GM12878 (cell line): ENCODE measurements at regions of chr2 and their contacts with region 1.

Region 1: DNA sequence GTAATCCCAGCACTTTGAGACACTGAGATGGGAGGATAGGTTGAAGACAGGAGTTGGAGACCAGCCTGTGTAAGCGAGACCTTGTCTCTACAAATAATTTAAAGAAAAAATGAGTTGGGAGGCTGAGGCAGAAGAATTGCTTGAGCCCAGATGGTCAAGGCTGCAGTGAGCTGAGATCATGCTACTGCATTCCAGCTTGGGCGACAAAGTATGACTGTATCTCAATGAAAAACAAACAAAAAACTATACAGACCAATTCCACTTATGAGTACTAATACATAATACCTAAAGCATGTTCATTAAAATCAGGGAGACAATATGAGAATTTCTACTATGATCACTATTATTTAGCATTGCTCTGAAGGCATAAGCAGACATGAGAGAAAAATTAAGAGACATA is 12.6 kb downstream of the RNF149 start:
- DNase-seq: no peak
- ATAC-seq: no peak
- H3K4me3 ChIP-seq: no peak overlapping the region
- H3K27ac ChIP-seq: no peak overlapping the region
- H3K4me1 ChIP-seq: peaks cover 10% of the 10 kb centered on the region; the same call in 1 of the 2 replicates
- H3K27me3 ChIP-seq: no peaks in the 10 kb centered on the region
- CTCF ChIP-seq: no peak
- EP300 ChIP-seq: no peak
- POLR2A ChIP-seq: no peak
- RAD21 ChIP-seq: no peak

Region 2: DNA sequence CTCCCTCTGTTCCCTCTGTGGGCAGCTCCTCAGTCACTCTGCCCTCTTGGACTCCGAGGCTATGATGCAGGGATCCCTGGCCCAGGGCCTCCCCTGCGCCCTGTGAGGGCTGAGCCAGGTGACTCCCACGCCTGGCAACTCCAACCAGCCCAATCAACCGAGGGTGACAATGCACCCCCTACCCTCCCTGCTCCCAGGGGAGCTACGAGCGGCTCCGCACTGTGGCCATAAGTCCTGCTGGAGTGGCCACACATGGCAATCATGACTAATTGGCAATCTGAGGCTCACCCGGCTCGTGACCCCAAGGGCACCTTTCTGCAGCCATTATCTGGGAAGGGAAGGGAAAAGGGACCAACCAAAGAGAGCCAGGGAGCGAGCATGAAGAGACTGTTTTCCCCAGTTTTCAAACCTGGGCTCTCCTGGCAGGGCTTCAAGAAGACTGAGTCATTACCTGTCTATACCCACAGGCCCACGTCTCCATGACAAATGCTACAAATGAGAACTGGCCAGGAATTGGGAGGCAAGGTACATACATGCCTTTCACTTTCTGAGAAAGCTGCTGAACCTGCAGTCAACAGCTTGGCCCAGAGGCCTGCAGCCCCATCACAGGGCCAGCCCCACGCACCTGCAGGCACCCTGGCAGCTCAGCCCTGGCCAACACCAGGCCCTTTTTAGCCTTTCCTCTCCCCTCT is 248.7 kb before region 1 on chr2:
- CTCF ChIA-PET with region 1: no interaction called
- POLR2A ChIA-PET with region 1: no interaction called
- RAD21 ChIA-PET with region 1: no interaction called
- SMC1A ChIA-PET with region 1: no interaction called
- in situ Hi-C with region 1: no loop called
- intact Hi-C with region 1: no loop called
- DNase-seq: no peak
- ATAC-seq: no peak; the same call in 2 of the 3 replicates
- H3K4me3 ChIP-seq: no peak overlapping the region
- H3K27ac ChIP-seq: no peak overlapping the region
- H3K4me1 ChIP-seq: peaks cover 30% of the 10 kb centered on the region
- H3K27me3 ChIP-seq: no peaks in the 10 kb centered on the region
- CTCF ChIP-seq: no peak
- EP300 ChIP-seq: no peak
- POLR2A ChIP-seq: no peak
- RAD21 ChIP-seq: no peak

Region 3: DNA sequence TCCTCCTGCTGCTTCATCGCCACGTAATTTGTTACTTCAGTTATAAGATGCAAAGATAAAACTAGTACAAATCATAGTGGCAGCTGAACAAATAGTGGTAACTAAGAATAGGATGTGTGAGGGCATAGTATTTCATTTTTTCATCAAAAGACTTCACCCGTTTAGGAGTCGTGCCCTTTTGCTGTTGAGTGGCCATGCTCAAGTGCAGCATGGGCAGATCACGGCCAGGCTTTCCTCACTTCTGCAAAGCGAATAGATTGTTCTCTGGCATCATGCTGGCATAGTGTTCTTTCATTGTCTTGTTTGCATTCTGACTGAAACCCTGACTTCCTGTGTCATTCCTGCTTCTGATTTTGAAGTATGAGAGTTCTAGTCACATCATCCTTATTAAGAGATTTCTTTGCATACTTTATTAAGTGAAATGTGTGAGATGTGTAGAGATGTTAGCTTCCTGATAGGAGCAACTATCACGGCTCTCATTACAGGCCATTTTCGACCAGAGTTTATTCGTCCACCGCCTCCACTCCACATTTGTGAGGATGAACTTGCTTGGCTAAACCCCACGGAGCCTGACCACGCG is 31.4 kb before region 1 on chr2:
- CTCF ChIA-PET with region 1: interaction called, 3 read pairs
- POLR2A ChIA-PET with region 1: no interaction called
- RAD21 ChIA-PET with region 1: no interaction called
- SMC1A ChIA-PET with region 1: interaction called, 10 read pairs
- in situ Hi-C with region 1: loop called (anchors 5 kb)
- intact Hi-C with region 1: no loop called
- DNase-seq: no peak
- ATAC-seq: no peak
- H3K4me3 ChIP-seq: no peak overlapping the region
- H3K27ac ChIP-seq: no peak overlapping the region
- H3K4me1 ChIP-seq: no peaks in the 10 kb centered on the region
- H3K27me3 ChIP-seq: no peaks in the 10 kb centered on the region
- CTCF ChIP-seq: no peak
- EP300 ChIP-seq: no peak
- POLR2A ChIP-seq: no peak
- RAD21 ChIP-seq: no peak

Region 4: DNA sequence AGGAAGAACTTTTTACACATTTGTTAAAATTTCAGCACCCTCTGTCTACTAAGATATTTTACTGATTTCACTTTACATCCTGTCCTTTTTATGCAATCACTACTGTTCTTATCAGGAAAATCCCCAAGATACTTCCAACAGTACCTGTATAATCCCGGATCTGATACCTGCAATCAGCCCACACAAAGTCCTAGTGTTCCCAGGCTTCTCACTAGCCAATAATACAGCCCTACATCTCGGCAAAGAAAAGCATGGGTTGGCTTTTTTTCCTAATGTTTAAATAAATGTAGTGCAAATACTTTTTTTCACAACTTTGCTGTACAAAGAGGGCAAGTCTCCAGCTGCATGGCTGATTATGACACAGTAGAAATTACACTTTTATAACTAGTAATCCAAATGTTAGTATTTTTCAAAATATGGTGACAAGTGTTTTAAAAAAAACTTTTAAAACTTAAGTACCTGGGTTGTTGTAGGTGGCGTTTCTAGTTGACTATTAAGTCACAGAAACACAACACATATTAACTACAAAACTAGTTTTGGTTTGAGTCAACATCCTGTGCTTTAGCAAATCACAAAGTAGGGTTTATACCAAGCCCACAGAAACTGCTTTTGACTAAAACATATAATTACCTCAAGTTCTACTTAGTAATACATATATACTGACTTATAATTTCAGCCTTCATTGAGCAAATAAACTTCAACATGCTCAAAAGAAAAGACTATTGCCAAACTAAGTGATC is 23.7 kb before region 1 on chr2:
- CTCF ChIA-PET with region 1: interaction called, 3 read pairs
- POLR2A ChIA-PET with region 1: interaction called, 5 read pairs
- RAD21 ChIA-PET with region 1: no interaction called
- SMC1A ChIA-PET with region 1: interaction called, 10 read pairs
- in situ Hi-C with region 1: no loop called
- intact Hi-C with region 1: no loop called
- DNase-seq: peak; percentile 73
- ATAC-seq: peak; percentile 93
- H3K4me3 ChIP-seq: no peak overlapping the region
- H3K27ac ChIP-seq: peak overlapping the region; percentile 50; the same call in 1 of the 2 replicates
- H3K4me1 ChIP-seq: peaks cover 13% of the 10 kb centered on the region
- H3K27me3 ChIP-seq: no peaks in the 10 kb centered on the region
- CTCF ChIP-seq: no peak
- EP300 ChIP-seq: peak; percentile 46 to 74; a peak in 2 of 4 replicates
- POLR2A ChIP-seq: no peak
- RAD21 ChIP-seq: no peak

Region 5: GRCh38 chr2:101282980-101283379 is 12.9 kb before region 1 on chr2:
- CTCF ChIA-PET with region 1: interaction called, 5 read pairs
- POLR2A ChIA-PET with region 1: interaction called, 4 read pairs
- RAD21 ChIA-PET with region 1: no interaction called
- SMC1A ChIA-PET with region 1: interaction called, 13 read pairs
- in situ Hi-C with region 1: no loop called
- intact Hi-C with region 1: no loop called
- DNase-seq: no peak
- ATAC-seq: no peak
- H3K4me3 ChIP-seq: no peak overlapping the region
- H3K27ac ChIP-seq: no peak overlapping the region
- H3K4me1 ChIP-seq: no peaks in the 10 kb centered on the region
- H3K27me3 ChIP-seq: no peaks in the 10 kb centered on the region
- CTCF ChIP-seq: no peak
- EP300 ChIP-seq: no peak
- POLR2A ChIP-seq: no peak
- RAD21 ChIP-seq: no peak